Thyroid gland (tissue), 4 donors: ENCODE measurements at regions of chr2 and their contacts with region 1.

Region 1: GRCh38 chr2:229921892-229922445 is at the start of gene TRIP12:
- DNase-seq: peak; percentile 94 to 95
- H3K4me3 ChIP-seq: peak within 1 kb of the TSS; percentile 81 to 96 (median 89)
- H3K27ac ChIP-seq: peak within 1 kb of the TSS; percentile 96 to 99 (median 98)
- H3K4me1 ChIP-seq: peaks cover 3 to 13% of the 10 kb centered on the region in 2 donors
- H3K27me3 ChIP-seq: no peaks in the 10 kb centered on the region
- CTCF ChIP-seq: no peak
- POLR2A ChIP-seq: peak in 1 of 2 donors; percentile 40
- total RNA-seq, gene TRIP12: 155 to 273 (median 184) TPM

Region 2: GRCh38 chr2:229519655-229520430 is 402.1 kb before region 1 on chr2:
- intact Hi-C with region 1: no loop called
- DNase-seq: no peak
- H3K4me3 ChIP-seq: no peak overlapping the region
- H3K27ac ChIP-seq: no peak overlapping the region
- H3K4me1 ChIP-seq: no peaks in the 10 kb centered on the region
- H3K27me3 ChIP-seq: no peaks in the 10 kb centered on the region
- CTCF ChIP-seq: no peak
- POLR2A ChIP-seq: no peak

Region 3: DNA sequence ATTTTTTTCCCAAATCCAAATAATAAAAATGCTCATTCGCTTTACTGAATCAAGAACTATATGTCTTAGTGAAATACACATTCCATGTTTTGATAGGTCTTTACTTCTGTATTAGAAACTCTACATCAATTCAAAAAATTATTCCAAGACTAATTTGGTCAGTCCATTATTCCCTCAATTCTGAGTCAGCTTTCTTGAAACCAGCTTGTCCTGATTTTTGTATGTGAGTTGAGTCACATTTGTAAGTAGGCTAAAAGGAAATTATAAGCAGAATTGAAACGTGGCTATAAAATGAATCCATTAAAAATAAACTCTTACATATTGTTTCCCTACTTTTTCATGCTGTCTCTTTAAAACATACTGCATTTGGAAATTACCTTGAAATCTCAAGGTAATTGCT is 320.6 kb before region 1 on chr2:
- intact Hi-C with region 1: no loop called
- DNase-seq: no peak
- H3K4me3 ChIP-seq: no peak overlapping the region
- H3K27ac ChIP-seq: no peak overlapping the region
- H3K4me1 ChIP-seq: peaks cover 12 to 13% of the 10 kb centered on the region in 2 donors
- H3K27me3 ChIP-seq: no peaks in the 10 kb centered on the region
- CTCF ChIP-seq: no peak
- POLR2A ChIP-seq: no peak

Region 4: GRCh38 chr2:229815858-229816257 is 106.1 kb before region 1 on chr2:
- intact Hi-C with region 1: loop called (anchors 10 kb)
- DNase-seq: no peak
- H3K4me3 ChIP-seq: no peak overlapping the region
- H3K27ac ChIP-seq: peak overlapping the region in 2 of 3 donors; percentile 21 to 41
- H3K4me1 ChIP-seq: peaks cover 4 to 13% of the 10 kb centered on the region in 2 donors
- H3K27me3 ChIP-seq: no peaks in the 10 kb centered on the region
- CTCF ChIP-seq: no peak
- POLR2A ChIP-seq: no peak

Region 5: GRCh38 chr2:229980431-229981184 is 58.6 kb after region 1 on chr2:
- intact Hi-C with region 1: no loop called
- DNase-seq: peak; percentile 11 to 41
- H3K4me3 ChIP-seq: no peak overlapping the region
- H3K27ac ChIP-seq: peak overlapping the region in 1 of 3 donors; percentile 15
- H3K4me1 ChIP-seq: peaks cover 0 to 5% of the 10 kb centered on the region in 2 donors
- H3K27me3 ChIP-seq: no peaks in the 10 kb centered on the region
- CTCF ChIP-seq: no peak
- POLR2A ChIP-seq: no peak

Region 6: DNA sequence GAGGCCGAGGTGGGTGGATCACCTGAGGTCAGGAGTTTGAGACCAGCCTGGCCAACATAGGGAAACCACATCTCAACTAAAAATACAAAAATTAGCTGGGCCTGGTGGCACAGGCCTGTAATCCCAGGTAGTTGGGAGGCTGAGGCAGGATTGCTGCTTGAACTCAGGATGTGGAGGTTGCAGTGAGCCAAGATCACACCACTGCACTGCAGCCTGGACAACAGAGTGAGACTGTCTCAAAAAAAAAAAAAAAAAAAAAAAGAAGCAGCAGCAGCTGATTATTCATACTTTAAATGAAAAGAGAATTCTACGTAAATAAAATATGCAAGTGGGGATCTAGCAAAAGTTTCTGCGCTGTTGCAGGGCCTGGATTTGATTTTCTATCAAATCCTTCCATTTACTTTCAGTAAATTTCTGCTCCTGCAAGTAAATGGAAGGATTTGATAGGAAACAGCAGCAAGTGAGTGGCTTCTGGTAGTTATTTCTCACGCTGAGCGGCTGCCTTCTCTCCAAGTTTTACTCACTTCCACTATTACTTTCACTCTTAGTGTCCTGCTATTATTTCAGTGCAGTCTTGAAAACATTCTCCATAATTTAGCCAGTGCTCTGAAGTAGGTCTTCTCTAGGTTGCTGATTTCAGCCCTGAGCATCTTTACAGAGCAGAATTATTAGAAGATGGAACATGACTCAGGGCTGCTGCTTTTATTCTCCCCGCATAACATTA is 78.3 kb after region 1 on chr2:
- intact Hi-C with region 1: no loop called
- DNase-seq: no peak
- H3K4me3 ChIP-seq: no peak overlapping the region
- H3K27ac ChIP-seq: no peak overlapping the region
- H3K4me1 ChIP-seq: no peaks in the 10 kb centered on the region
- H3K27me3 ChIP-seq: no peaks in the 10 kb centered on the region
- CTCF ChIP-seq: no peak
- POLR2A ChIP-seq: no peak